ENCODE measurements at regions of chr13 and their contacts with region 1.

Region 1: GRCh38 chr13:26482451-26483197 is 74.9 kb upstream of the WASF3 start:
- DNase-seq: peak; percentile 66 to 71
- ATAC-seq: peak in 1 of 2 experiments; percentile 66; a peak in 3 of 6 replicates
- H3K4me3 ChIP-seq: no peak overlapping the region
- H3K27ac ChIP-seq: no peak overlapping the region
- H3K4me1 ChIP-seq: no peaks in the 10 kb centered on the region
- CTCF ChIP-seq: peak; percentile 59
- EP300 ChIP-seq: no peak
- POLR2A ChIP-seq: no peak
- RAD21 ChIP-seq: peak; percentile 42; a peak in 4 of 5 replicates

Region 2: GRCh38 chr13:26494571-26495195 is 12.1 kb after region 1 on chr13:
- CTCF ChIA-PET with region 1: interaction called, 17 read pairs
- POLR2A ChIA-PET with region 1: no interaction called
- DNase-seq: no peak
- ATAC-seq: no peak
- H3K4me3 ChIP-seq: no peak overlapping the region
- H3K27ac ChIP-seq: no peak overlapping the region
- H3K4me1 ChIP-seq: no peaks in the 10 kb centered on the region
- CTCF ChIP-seq: no peak
- EP300 ChIP-seq: no peak
- POLR2A ChIP-seq: no peak
- RAD21 ChIP-seq: no peak

Region 3: DNA sequence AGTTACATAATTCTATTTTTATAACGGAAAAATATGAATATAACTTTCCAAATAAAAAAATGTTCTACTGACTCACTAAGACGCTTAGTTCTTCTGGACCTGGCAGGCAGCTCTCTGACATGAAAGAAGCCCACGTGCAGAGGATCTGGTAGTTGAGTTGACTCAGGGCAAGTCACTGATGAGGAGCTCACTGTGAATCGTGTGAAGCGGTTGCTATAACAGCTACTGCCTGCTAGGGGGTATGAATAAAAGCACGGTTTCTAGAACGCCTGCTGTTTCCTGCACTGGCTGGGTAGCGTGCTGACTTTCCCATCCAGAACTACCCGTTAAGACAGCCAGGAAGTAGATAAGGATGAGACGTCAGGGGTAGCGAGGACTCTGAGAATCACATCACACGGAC is 20.2 kb after region 1 on chr13:
- CTCF ChIA-PET with region 1: interaction called, 10 read pairs
- POLR2A ChIA-PET with region 1: no interaction called
- DNase-seq: no peak
- ATAC-seq: no peak
- H3K4me3 ChIP-seq: no peak overlapping the region
- H3K27ac ChIP-seq: no peak overlapping the region
- H3K4me1 ChIP-seq: no peaks in the 10 kb centered on the region
- CTCF ChIP-seq: no peak
- EP300 ChIP-seq: no peak
- POLR2A ChIP-seq: no peak
- RAD21 ChIP-seq: no peak